GM10248 (cell line): ENCODE measurements at regions of chr3 and their contacts with region 1.

Region 1: DNA sequence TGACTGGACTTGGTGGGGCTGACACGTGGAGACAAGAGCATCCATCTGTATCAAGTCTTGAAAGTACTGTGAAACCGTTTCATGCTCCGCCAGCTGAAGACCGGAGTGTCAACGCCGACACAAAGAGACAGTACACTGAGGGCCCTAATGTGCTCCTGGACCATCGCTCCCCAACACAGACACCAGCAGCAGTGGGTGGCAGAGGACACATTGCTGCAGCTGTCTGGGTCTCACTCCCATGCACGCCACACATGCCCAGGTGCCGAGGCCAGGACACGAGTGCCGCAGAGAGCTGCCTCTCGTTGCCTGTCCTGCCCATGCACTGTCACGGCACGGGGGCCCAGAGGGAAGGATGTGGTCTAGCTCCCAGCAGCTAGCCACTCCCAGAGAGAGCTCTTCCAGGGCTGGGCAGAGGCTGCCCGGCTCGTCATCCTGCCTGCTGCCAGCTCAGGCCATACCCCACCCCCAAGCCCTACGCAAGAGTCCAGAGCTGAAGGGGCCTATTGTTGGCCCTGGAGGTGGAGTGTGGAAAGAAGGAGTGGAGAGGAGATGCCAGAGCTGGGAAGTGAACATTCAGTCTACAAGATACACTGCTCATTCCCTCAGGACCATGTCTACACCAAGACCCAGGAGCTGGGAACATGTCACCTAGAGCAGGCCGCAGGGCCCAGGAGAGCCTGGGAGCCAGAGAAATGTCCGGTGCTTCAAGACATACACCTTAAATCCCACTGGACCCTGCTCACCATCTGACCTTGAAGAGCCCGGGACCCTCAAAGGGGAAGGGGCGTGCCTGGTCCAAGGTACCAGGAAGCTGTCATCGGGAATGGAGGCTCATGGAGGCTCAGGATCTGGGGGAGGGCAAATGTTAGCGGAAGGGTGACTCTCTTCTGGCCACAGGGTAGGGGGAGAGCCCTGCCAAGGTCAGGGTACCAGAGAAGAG is 7.6 kb downstream of the TNK2 start:
- DNase-seq: peak; percentile 59
- CTCF ChIP-seq: no peak

Region 2: DNA sequence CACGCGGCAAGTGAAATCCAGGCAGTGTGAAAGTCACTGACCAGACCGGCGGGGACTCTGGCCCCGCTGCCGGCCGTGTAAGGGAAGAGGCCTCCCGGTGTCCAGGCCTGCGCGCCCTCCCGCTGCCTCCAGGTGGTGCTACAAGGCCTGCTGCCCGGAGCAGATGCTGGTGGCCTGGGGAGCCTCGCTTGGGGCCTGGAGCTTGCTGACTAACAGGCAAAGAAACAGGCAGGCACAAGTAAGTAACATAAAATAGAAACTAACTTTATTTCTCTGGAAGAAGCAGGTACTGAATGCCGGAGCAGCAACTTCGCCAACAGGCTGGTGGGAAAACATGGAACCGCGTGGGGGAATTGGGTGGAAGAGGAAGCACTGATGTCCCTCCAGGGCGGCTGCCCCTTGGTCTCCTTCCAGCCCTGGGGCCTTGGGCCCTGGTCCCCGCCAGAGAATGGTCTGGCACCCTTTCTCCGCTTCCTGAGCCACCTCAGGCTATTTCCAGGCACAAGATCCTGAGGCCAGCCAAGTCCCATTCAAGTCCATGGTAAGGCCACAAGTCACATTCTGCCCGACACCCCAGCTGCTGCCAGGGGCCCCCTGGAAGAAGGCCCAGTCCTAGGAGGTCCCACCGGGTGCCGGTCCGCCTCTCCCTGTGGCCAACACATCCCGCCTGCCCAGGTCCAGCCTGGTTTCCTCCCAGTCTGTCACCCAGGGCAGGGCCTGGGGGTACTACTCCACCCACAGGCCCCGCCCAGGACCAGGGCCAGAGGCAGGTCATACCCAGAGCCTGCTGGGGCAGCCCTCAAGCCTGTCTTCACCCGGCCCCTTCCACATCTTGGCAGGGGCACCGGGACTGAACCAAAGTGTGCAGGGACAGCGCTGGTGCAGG is 37.3 kb before region 1 on chr3:
- CTCF ChIA-PET with region 1: interaction called, 254 read pairs
- POLR2A ChIA-PET with region 1: no interaction called
- DNase-seq: peak; percentile 84
- CTCF ChIP-seq: peak; percentile 94